Activated CD8-positive, alpha-beta T cell treated with anti-CD3 and anti-CD28 coated beads for 36 hours (primary cell): ENCODE measurements at regions of chr21 and their contacts with region 1.

Region 1: DNA sequence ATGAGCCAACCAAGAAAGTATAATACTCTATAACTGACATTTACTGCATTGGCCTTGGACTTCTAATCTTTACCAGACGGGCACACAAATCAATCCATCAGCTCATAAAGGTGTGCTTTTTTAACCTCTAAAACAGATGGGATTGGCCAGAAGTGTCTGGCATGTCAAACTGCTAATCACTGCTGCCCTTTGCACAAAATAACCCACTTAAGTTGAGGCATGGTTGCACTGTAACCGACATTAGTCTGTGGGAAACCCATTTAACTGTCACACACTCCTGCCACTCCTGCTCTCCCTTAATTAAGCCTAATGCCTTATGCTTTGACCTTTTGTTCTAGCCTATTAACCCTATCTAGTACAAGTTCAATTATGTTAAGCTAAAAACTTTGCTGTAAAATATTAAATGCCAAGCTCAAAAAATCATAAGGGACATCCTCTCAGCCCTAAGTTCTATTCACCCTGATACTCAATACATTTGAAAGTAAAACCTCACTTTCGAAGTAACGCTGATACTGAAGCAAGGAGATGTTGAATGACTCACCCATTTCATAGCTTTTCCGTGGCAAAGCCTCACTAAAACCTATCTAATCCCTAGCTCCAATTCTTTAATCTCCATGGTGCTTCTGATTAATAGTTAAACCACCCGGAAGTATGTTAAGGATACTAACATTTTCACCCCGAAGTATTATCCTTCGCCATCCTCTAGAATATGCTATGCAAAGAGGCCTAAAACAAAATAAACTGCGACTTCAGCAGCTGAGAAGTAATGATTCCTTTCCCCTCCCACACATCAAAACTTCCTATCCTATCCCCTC is 12.9 kb downstream of the NRIP1 start:
- DNase-seq: peak; percentile 14
- ATAC-seq: peak; percentile 83
- H3K4me3 Mint-ChIP-seq: peak overlapping the region; percentile 71
- H3K27ac Mint-ChIP-seq: peak overlapping the region; percentile 89
- H3K4me1 Mint-ChIP-seq: peaks cover 73% of the 10 kb centered on the region
- H3K27me3 Mint-ChIP-seq: no peaks in the 10 kb centered on the region
- CTCF ChIP-seq: no peak

Region 2: DNA sequence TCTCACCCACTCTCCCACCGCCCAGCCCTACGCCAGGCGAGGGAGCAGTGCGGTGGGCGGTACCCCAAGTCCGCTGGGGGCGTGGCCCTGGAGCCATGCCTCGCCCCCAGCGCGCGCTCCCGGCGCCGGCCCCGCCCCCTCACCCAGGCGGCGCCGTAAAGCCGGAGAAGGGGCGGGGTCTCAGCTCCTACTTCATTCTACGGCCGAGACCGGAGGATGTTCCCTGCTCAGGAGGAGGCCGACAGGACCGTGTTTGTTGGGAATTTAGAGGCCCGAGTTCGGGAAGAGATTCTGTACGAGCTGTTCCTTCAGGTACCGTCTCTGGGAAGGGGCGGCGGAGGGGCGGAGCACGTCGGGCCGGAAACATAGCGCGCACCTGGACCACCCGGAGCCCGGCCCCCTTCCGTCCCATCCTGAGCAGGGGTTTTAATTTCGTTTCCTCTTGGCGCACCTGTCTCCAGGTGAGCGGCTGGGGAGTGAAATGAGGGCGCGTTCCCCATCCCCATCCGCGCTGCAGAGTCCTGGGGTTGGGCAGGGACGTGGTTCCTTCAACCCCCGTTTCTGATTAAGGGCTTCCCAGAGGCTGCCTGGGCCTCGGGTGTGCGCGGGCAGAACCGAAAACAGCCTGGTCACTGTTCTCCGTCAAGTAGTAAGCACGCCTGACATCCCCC is 835.7 kb before region 1 on chr21 and contains the start of gene RBM11:
- CTCF ChIA-PET with region 1: no interaction called
- POLR2A ChIA-PET with region 1: no interaction called
- intact Hi-C with region 1: no loop called
- DNase-seq: peak; percentile 83
- ATAC-seq: peak; percentile 99
- H3K4me3 Mint-ChIP-seq: peak within 1 kb of the TSS; percentile 77
- H3K27ac Mint-ChIP-seq: peak within 1 kb of the TSS; percentile 49
- H3K4me1 Mint-ChIP-seq: peaks cover 7% of the 10 kb centered on the region
- H3K27me3 Mint-ChIP-seq: peaks cover 10% of the 10 kb centered on the region
- CTCF ChIP-seq: no peak
- total RNA-seq, gene RBM11: 2.3 to 2.7 TPM

Region 3: DNA sequence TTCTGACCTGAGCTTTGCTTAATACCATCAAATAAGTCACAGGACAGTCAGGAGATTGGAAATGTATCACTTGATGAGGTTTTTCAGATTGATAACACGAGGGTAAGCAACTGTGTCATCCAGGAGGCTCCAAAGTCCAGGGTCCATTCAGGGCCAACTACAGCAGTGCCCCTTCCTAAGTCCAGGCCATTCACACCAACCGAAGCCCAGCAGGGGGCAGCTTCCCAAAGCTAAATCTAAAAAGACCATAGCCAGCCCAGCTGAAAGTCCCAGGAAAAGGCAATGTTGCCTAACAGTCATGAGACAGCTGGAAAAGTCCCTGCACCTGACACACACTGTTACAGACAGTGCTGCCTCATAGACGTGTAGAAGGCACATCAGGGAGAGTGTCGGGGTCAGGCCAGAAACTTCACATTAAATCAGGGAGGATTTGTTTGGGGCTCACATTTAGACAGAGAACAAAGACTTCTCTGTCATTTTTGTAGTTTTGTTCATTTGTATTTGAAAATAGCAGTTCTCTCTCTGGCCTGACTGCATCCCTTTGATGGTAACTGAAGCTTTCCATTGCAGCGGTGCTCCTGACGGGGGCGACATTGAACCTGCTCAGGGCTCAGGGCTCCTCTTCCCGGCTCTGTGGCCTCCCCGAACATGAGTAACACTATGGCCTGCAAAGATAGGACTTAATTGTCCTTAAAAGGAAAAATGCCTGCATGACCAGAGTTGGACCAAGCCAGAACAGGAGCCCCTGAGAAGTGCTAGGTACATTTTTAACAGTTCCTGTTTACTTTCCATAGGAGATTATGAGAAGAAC is 187.4 kb before region 1 on chr21:
- CTCF ChIA-PET with region 1: no interaction called
- POLR2A ChIA-PET with region 1: no interaction called
- intact Hi-C with region 1: loop called (anchors 10 kb)
- DNase-seq: peak; percentile 72
- ATAC-seq: peak; percentile 82
- H3K4me3 Mint-ChIP-seq: no peak overlapping the region
- H3K27ac Mint-ChIP-seq: no peak overlapping the region
- H3K4me1 Mint-ChIP-seq: peaks cover 7% of the 10 kb centered on the region
- H3K27me3 Mint-ChIP-seq: peaks cover 7% of the 10 kb centered on the region
- CTCF ChIP-seq: peak; percentile 68

Region 4: DNA sequence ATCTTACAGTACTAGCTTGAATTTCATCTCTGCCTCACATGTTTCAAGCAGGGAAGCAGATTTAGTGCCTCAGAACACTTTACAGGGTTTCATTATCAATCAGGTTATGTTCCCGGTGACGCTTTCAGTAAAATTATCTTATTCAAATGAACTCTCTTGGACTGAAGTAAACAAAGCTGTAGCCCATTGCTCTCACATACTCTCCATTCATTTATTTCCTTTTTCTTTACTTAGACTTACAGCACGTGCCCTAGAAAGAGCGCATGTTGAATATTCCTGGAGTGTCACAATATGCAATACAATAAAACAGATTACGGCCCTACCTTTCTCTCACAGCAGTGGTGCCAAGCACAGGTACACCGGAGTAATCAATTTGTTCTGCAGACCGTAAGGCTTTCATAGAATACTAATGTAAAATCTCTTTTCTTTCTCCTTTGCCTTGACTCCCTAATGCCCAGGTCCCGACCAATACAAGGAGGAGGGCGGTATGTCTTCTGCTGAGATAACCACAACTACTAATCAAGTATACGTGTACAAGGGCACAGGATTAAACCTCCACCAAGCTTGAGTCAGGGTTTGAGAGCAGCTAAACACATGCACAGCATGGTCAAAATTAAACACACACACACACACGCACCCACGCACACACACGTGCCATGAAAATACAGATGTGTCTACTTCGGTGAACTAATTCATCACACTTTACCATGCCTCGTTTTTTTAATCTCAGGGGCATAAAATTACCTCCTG is 49.8 kb before region 1 on chr21:
- CTCF ChIA-PET with region 1: no interaction called
- POLR2A ChIA-PET with region 1: no interaction called
- intact Hi-C with region 1: loop called (anchors 5 kb)
- DNase-seq: no peak
- ATAC-seq: no peak
- H3K4me3 Mint-ChIP-seq: no peak overlapping the region
- H3K27ac Mint-ChIP-seq: peak overlapping the region; percentile 29
- H3K4me1 Mint-ChIP-seq: peaks cover 52% of the 10 kb centered on the region
- H3K27me3 Mint-ChIP-seq: no peaks in the 10 kb centered on the region
- CTCF ChIP-seq: no peak

Region 5: GRCh38 chr21:15084668-15085067 is 32.8 kb after region 1 on chr21:
- CTCF ChIA-PET with region 1: no interaction called
- POLR2A ChIA-PET with region 1: no interaction called
- intact Hi-C with region 1: no loop called
- DNase-seq: no peak
- ATAC-seq: no peak
- H3K4me3 Mint-ChIP-seq: no peak overlapping the region
- H3K27ac Mint-ChIP-seq: no peak overlapping the region
- H3K4me1 Mint-ChIP-seq: no peaks in the 10 kb centered on the region
- H3K27me3 Mint-ChIP-seq: no peaks in the 10 kb centered on the region
- CTCF ChIP-seq: no peak